Activated naive CD4-positive, alpha-beta T cell treated with anti-CD3 and anti-CD28 coated beads for 36 hours (primary cell): ENCODE measurements at regions of chr9 and their contacts with region 1.

Region 1: GRCh38 chr9:122125158-122125508 is 32.0 kb upstream of the TTLL11 start:
- DNase-seq: peak; percentile 84
- H3K4me3 Mint-ChIP-seq: no peak overlapping the region
- H3K27ac Mint-ChIP-seq: no peak overlapping the region
- H3K4me1 Mint-ChIP-seq: peaks cover 11% of the 10 kb centered on the region
- H3K27me3 Mint-ChIP-seq: peaks cover 22% of the 10 kb centered on the region

Region 2: DNA sequence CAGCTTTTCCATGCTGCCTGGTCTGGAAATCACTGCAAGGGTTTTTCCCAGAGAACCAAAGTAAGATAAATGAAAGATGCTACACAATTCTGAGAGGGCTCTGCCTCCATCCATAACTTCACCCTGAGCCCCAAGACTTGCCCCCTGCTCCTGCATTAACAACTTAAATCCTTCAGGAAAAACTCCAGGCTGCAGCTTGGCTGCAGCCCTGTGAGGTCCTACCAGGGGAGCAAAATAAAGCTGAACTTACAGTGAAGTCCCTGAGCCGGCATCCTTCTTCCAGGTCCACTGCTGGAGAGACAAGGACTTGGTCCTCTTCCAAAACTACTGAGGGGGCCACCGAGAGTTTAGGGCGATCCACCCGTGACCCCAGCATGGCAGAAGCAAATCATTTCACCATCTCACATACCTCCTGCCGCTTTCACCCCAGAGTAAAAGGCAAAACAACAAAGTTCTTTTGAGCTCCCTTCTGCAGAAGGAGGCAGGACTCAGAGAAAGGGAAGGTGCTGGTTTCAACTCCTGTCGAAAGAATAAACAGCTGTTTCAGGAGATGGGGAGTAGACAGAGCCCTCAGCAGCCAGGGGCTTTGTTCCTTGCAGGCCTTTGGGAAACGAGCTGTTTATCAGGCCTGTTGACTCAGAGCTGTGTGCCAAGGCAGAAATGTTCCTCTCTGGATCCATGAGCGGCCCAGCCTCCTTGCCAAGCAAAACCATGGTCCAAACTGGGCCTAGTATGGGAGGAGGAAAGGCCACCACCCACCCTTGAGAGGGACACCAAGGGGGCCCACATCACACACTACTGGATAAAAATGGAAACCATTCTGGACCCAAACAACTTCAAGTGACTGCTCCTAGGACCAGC is 646.1 kb before region 1 on chr9:
- CTCF ChIA-PET with region 1: no interaction called
- intact Hi-C with region 1: no loop called
- DNase-seq: no peak
- H3K4me3 Mint-ChIP-seq: no peak overlapping the region
- H3K27ac Mint-ChIP-seq: no peak overlapping the region
- H3K4me1 Mint-ChIP-seq: no peaks in the 10 kb centered on the region
- H3K27me3 Mint-ChIP-seq: no peaks in the 10 kb centered on the region

Region 3: DNA sequence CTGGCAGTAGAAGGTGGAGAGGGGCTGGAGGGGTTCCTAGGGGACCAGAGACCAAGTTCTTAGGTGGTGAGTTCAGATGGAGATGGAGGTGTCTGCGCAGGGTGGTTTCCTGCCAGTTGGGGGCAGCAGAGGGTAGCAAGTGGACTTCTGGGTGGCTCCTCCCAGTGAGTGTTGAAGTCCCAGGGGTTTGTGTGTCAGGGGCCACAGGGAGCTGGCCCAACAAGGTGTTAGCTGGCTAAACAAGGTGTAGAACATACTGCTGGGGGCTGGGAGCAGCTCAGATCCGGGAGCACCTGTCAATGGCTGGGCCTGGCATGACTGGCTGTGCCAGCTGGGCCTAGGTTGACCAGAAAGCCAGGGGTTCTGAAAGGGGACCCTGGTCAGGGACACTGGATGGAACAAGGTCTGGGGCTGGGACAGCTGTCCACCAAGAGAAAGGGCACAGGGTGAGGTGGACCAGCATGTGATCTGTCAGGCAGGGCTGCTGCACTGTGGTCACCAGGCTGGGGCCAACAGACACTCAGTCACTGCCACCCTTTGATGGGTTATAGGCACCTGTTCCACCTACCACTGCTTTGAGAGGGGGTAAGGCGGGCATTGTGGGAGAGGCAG is 438.1 kb before region 1 on chr9:
- CTCF ChIA-PET with region 1: no interaction called
- intact Hi-C with region 1: loop called (anchors 1 kb)
- DNase-seq: peak; percentile 82
- H3K4me3 Mint-ChIP-seq: no peak overlapping the region
- H3K27ac Mint-ChIP-seq: no peak overlapping the region
- H3K4me1 Mint-ChIP-seq: no peaks in the 10 kb centered on the region
- H3K27me3 Mint-ChIP-seq: no peaks in the 10 kb centered on the region

Region 4: DNA sequence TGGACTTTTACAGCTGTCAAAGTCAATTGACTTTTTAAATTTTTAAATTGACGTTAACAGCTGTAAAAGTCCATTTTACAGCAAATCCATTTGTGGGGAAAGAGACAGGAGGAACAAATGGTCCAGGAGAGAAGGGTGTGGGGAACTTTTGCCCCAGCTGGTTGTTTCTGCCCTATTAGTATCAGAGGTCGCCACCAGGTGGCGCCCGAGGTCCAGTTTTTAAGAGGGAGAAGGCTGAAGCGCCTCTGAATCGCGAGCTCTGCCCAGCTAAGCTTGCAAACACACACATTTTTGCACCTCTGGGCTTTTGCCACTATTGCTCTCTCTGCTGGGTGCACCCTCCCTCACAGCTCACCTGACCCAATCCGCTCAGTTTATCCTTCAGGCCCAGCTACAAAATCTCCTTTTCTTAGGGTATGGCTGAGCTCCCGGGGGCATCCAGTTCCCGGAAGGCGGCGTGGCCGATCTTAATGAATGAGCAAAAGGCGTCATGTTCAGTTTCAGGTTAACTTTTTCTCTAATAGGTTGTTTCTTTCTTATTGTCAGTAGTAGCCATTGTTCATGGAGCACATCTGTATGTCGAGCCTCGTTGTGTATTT is 25.8 kb before region 1 on chr9:
- CTCF ChIA-PET with region 1: interaction called, 188 read pairs
- intact Hi-C with region 1: loop called (anchors 1 kb)
- DNase-seq: peak; percentile 85
- H3K4me3 Mint-ChIP-seq: peak overlapping the region; percentile 41
- H3K27ac Mint-ChIP-seq: no peak overlapping the region
- H3K4me1 Mint-ChIP-seq: peaks cover 9% of the 10 kb centered on the region
- H3K27me3 Mint-ChIP-seq: peaks cover 4% of the 10 kb centered on the region

Region 5: GRCh38 chr9:122190609-122191381 is 65.7 kb after region 1 on chr9:
- CTCF ChIA-PET with region 1: interaction called, 3 read pairs
- intact Hi-C with region 1: loop called (anchors 10 kb)
- DNase-seq: no peak
- H3K4me3 Mint-ChIP-seq: no peak overlapping the region
- H3K27ac Mint-ChIP-seq: no peak overlapping the region
- H3K4me1 Mint-ChIP-seq: no peaks in the 10 kb centered on the region
- H3K27me3 Mint-ChIP-seq: peaks cover 3% of the 10 kb centered on the region

Region 6: DNA sequence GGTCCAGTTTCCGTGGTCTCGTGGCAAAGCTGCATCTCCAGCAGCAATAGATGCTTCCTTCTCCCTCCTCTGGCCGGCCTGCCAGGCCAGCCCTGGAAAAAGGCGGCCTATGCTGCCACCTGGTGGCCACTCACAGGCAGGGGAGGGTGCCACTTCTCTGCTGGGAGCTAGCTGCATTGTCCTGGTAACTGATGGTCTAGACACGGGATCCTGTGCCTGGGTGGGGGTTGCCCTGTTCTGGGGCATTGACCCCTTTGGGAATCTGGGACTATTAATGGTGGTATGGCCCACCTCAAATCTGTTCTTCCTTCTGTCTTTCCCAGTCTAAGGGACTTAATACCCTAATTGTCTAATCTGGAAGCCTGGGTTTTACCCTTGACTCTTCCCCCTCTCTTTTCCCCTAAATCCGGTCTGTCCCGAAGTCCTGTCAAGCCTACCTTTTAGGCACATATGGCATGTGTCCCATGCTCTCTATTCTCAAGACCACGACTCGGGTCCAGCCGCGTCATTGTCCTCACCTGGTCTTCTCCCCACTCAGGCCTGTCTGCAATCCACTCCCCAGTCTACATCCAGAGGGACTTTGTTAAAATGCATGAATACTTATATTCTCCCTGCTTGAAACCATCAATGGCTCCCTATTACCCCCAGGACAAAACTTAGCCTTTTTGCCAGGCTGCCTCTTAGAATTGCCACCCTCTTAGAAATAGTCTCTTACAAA is 225.7 kb after region 1 on chr9:
- CTCF ChIA-PET with region 1: interaction called, 139 read pairs
- intact Hi-C with region 1: loop called (anchors 1 kb)
- DNase-seq: peak; percentile 82
- H3K4me3 Mint-ChIP-seq: no peak overlapping the region
- H3K27ac Mint-ChIP-seq: no peak overlapping the region
- H3K4me1 Mint-ChIP-seq: peaks cover 2% of the 10 kb centered on the region
- H3K27me3 Mint-ChIP-seq: peaks cover 29% of the 10 kb centered on the region

Region 7: GRCh38 chr9:122464633-122465567 is 339.8 kb after region 1 on chr9:
- CTCF ChIA-PET with region 1: no interaction called
- intact Hi-C with region 1: loop called (anchors 5 kb)
- DNase-seq: peak; percentile 83
- H3K4me3 Mint-ChIP-seq: peak overlapping the region; percentile 72
- H3K27ac Mint-ChIP-seq: peak overlapping the region; percentile 68
- H3K4me1 Mint-ChIP-seq: peaks cover 11% of the 10 kb centered on the region
- H3K27me3 Mint-ChIP-seq: peaks cover 17% of the 10 kb centered on the region